IMR-90 (cell line): ENCODE measurements at regions of chr4 and their contacts with region 1.

Region 1: GRCh38 chr4:174037049-174037448 is 246.4 kb downstream of the FBXO8 start:
- DNase-seq: no peak
- ATAC-seq: no peak
- H3K4me3 ChIP-seq: no peak overlapping the region
- H3K27ac ChIP-seq: no peak overlapping the region
- H3K4me1 ChIP-seq: no peaks in the 10 kb centered on the region
- H3K27me3 ChIP-seq: no peaks in the 10 kb centered on the region
- CTCF ChIP-seq: no peak
- POLR2A ChIP-seq: no peak
- RAD21 ChIP-seq: no peak

Region 2: GRCh38 chr4:173448603-173449379 is 588.3 kb before region 1 on chr4:
- CTCF ChIA-PET with region 1: no interaction called
- POLR2A ChIA-PET with region 1: no interaction called
- dilution Hi-C with region 1: no loop called
- in situ Hi-C with region 1: no loop called
- intact Hi-C with region 1: loop called (anchors 1 kb)
- DNase-seq: peak; percentile 33
- ATAC-seq: peak; percentile 71
- H3K4me3 ChIP-seq: no peak overlapping the region
- H3K27ac ChIP-seq: peak overlapping the region; percentile 39; the same call in 1 of the 2 replicates
- H3K4me1 ChIP-seq: peaks cover 8% of the 10 kb centered on the region; the same call in 1 of the 2 replicates
- H3K27me3 ChIP-seq: no peaks in the 10 kb centered on the region
- CTCF ChIP-seq: no peak
- POLR2A ChIP-seq: no peak
- RAD21 ChIP-seq: no peak

Region 3: GRCh38 chr4:174080361-174080760 is 43.3 kb after region 1 on chr4:
- CTCF ChIA-PET with region 1: no interaction called
- POLR2A ChIA-PET with region 1: no interaction called
- dilution Hi-C with region 1: no loop called
- in situ Hi-C with region 1: no loop called
- intact Hi-C with region 1: no loop called
- DNase-seq: peak; percentile 9
- ATAC-seq: peak; percentile 56; the same call in 1 of the 2 replicates
- H3K4me3 ChIP-seq: no peak overlapping the region
- H3K27ac ChIP-seq: no peak overlapping the region
- H3K4me1 ChIP-seq: no peaks in the 10 kb centered on the region
- H3K27me3 ChIP-seq: no peaks in the 10 kb centered on the region
- CTCF ChIP-seq: no peak
- POLR2A ChIP-seq: no peak
- RAD21 ChIP-seq: no peak

Region 4: GRCh38 chr4:174340714-174341113 is 303.7 kb after region 1 on chr4:
- CTCF ChIA-PET with region 1: no interaction called
- POLR2A ChIA-PET with region 1: no interaction called
- dilution Hi-C with region 1: no loop called
- in situ Hi-C with region 1: no loop called
- intact Hi-C with region 1: no loop called
- DNase-seq: no peak
- ATAC-seq: no peak
- H3K4me3 ChIP-seq: no peak overlapping the region
- H3K27ac ChIP-seq: no peak overlapping the region
- H3K4me1 ChIP-seq: no peaks in the 10 kb centered on the region
- H3K27me3 ChIP-seq: no peaks in the 10 kb centered on the region
- CTCF ChIP-seq: no peak
- POLR2A ChIP-seq: no peak
- RAD21 ChIP-seq: no peak

Region 5: DNA sequence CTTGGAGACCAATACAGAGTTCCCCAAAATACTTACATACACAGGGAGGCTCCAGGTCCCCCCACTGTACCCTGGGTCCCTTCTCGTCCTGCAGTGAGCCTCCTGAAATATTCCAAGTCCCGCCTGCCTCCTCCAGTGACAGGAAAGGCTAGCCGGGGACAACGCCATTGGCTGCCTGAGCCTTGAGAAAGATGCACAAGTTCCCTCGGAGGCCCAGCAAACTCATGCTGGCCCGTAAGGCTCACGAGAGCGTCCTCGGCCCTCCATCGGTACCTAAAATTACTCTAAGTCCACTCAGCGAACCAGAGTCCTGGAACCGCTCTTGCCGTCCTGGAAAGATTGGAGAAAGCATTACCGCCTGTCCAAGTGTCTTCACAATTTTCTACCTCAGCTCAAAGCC is 1109.8 kb after region 1 on chr4:
- CTCF ChIA-PET with region 1: no interaction called
- POLR2A ChIA-PET with region 1: no interaction called
- dilution Hi-C with region 1: no loop called
- in situ Hi-C with region 1: no loop called
- intact Hi-C with region 1: no loop called
- DNase-seq: no peak
- ATAC-seq: no peak
- H3K4me3 ChIP-seq: no peak overlapping the region
- H3K27ac ChIP-seq: no peak overlapping the region
- H3K4me1 ChIP-seq: no peaks in the 10 kb centered on the region
- H3K27me3 ChIP-seq: no peaks in the 10 kb centered on the region
- CTCF ChIP-seq: no peak
- POLR2A ChIP-seq: no peak
- RAD21 ChIP-seq: no peak